HEK293T (cell line): ENCODE measurements at regions of chr22 and their contacts with region 1.

Region 1: DNA sequence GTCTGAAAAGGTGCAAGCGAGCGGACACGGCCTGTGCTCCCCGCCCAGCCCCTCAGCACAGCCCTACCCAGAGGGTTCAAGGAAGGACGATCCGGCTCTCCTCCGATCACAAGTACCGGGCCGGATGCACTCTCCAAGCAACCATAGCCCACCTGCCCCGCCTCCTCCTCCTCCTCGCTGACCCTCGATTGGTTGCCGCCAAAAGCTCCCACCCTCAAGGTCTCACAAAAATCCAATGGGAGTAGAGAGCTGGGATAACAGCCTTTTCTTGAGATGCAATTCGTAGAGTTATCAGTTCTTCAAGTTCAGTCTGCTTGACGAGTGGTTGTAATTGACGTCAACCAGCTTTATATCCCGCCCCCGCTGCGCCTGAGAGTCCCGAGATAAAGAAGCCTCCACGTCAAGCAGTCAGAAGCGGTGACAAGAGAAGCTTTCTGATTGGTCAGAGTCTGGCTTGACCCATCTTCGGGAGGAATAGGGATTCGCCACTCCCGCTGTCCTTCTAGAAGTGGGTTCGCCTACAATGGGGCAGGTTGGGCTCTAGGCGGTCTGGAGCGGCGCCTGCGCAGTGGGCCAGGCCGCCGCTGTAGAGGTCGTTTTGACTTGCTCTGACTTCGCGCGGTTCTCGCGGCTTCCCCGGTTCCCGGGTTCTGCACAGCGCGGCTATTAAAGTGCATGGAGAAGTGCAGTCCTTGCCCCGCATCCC is at the start of gene IFT27:
- DNase-seq: peak; percentile 100

Region 2: DNA sequence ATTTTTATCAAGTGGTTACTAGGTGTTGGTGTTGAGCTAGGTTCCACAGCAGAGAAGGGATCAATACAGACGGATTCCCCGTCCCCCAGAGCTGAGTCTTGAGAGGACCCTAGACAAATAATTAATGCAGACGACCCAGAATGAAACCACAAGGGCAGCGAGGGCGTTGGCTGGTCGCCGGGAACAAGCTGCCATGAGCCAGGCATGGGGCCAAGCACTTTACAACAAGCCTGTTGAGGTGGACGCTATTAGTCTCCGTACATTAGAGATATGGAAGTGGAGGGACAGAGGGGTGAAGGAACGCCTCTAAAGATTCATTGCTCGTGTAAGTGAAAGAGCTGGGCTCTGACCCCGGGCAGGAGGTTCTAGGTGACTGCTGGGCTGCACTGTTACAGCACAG is 170.0 kb before region 1 on chr22:
- CTCF ChIA-PET with region 1: no interaction called
- POLR2A ChIA-PET with region 1: no interaction called
- DNase-seq: no peak

Region 3: GRCh38 chr22:36684841-36685240 is 91.3 kb before region 1 on chr22:
- CTCF ChIA-PET with region 1: no interaction called
- POLR2A ChIA-PET with region 1: no interaction called
- DNase-seq: no peak

Region 4: GRCh38 chr22:36731916-36732315 is 44.2 kb before region 1 on chr22:
- CTCF ChIA-PET with region 1: no interaction called
- POLR2A ChIA-PET with region 1: no interaction called
- DNase-seq: no peak

Region 5: GRCh38 chr22:36757668-36758211 is 18.4 kb before region 1 on chr22:
- CTCF ChIA-PET with region 1: interaction called, 30 read pairs
- POLR2A ChIA-PET with region 1: interaction called, 13 read pairs
- DNase-seq: peak; percentile 86

Region 6: DNA sequence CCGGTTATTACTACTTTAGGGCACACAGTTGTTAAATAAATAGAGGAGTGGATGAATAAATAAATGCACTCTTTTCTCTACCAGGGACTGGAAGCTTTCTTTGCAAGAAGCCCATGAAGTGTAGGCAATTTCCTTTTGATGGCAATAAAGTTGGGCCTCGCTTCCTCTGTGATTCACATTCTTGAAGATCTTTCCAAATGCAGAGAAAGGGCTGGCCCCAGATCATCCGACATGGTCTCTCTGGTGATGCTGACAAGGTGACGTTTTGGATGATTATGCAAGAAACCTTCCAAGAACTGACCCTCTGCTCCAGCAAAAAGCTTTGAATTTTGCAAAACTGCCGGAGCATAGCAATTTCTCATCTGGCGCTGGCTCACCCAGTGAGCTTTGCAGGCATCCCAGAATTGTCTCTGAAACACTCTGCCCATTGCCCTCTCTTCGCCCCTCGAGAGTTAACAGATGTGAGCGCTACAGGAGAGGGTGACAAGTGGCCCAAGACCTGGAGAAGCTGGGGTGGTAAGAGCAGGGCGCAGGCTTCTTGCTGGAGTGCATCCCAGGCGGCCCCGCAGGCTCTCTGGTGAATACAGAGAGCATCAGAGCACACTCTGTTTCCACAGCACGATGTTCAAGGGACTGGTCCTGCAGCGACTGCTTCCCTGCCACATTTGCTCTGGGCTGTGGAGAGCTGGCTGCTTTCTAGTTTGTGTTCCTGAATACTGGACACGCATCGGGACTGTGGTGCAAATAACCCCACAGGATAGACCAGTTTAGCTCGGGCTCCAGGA is 11.3 kb after region 1 on chr22:
- CTCF ChIA-PET with region 1: no interaction called
- POLR2A ChIA-PET with region 1: interaction called, 15 read pairs
- DNase-seq: no peak